ENCODE measurements at regions of chr1 and their contacts with region 1.

Region 1: GRCh38 chr1:207868774-207869721 is 41.9 kb downstream of the CD34 start:
- DNase-seq: peak; percentile 90
- ATAC-seq: peak; percentile 74
- H3K4me3 ChIP-seq: peak overlapping the region; percentile 63 to 79 (median 66)
- H3K4me3 Mint-ChIP-seq: peak overlapping the region; percentile 93
- H3K27ac ChIP-seq: peak overlapping the region; percentile 51 to 55
- H3K27ac Mint-ChIP-seq: peak overlapping the region; percentile 77
- H3K4me1 ChIP-seq: peaks cover 59 to 75% of the 10 kb centered on the region in 2 donors
- H3K4me1 Mint-ChIP-seq: peaks cover 87% of the 10 kb centered on the region
- H3K27me3 ChIP-seq: no peaks in the 10 kb centered on the region
- H3K27me3 Mint-ChIP-seq: no peaks in the 10 kb centered on the region
- CTCF ChIP-seq: peak; percentile 77

Region 2: GRCh38 chr1:207751790-207752455 is 117.1 kb before region 1 on chr1 and contains the start of gene CD46:
- CTCF ChIA-PET with region 1: no interaction called
- POLR2A ChIA-PET with region 1: no interaction called
- intact Hi-C with region 1: loop called (anchors 5 kb)
- DNase-seq: peak; percentile 94
- ATAC-seq: peak; percentile 98
- H3K4me3 ChIP-seq: peak within 1 kb of the TSS; percentile 70 to 91 (median 81)
- H3K4me3 Mint-ChIP-seq: peak within 1 kb of the TSS; percentile 99
- H3K27ac ChIP-seq: peak within 1 kb of the TSS; percentile 81 to 89
- H3K27ac Mint-ChIP-seq: peak within 1 kb of the TSS; percentile 98
- H3K4me1 ChIP-seq: peaks cover 18 to 26% of the 10 kb centered on the region in 2 donors
- H3K4me1 Mint-ChIP-seq: peaks cover 49% of the 10 kb centered on the region
- H3K27me3 ChIP-seq: no peaks in the 10 kb centered on the region
- H3K27me3 Mint-ChIP-seq: no peaks in the 10 kb centered on the region
- CTCF ChIP-seq: no peak
- total RNA-seq, gene CD46: 168 and 173 TPM in 2 replicates

Region 3: GRCh38 chr1:207805841-207806421 is 63.1 kb before region 1 on chr1:
- CTCF ChIA-PET with region 1: interaction called, 167 read pairs
- POLR2A ChIA-PET with region 1: interaction called, 5 read pairs
- intact Hi-C with region 1: no loop called
- DNase-seq: peak; percentile 14
- ATAC-seq: no peak
- H3K4me3 ChIP-seq: no peak overlapping the region
- H3K4me3 Mint-ChIP-seq: no peak overlapping the region
- H3K27ac ChIP-seq: peak overlapping the region in 1 of 2 donors; percentile 82
- H3K27ac Mint-ChIP-seq: peak overlapping the region; percentile 26
- H3K4me1 ChIP-seq: peaks cover 25 to 32% of the 10 kb centered on the region in 2 donors
- H3K4me1 Mint-ChIP-seq: peaks cover 53% of the 10 kb centered on the region
- H3K27me3 ChIP-seq: no peaks in the 10 kb centered on the region
- H3K27me3 Mint-ChIP-seq: no peaks in the 10 kb centered on the region
- CTCF ChIP-seq: no peak

Region 4: DNA sequence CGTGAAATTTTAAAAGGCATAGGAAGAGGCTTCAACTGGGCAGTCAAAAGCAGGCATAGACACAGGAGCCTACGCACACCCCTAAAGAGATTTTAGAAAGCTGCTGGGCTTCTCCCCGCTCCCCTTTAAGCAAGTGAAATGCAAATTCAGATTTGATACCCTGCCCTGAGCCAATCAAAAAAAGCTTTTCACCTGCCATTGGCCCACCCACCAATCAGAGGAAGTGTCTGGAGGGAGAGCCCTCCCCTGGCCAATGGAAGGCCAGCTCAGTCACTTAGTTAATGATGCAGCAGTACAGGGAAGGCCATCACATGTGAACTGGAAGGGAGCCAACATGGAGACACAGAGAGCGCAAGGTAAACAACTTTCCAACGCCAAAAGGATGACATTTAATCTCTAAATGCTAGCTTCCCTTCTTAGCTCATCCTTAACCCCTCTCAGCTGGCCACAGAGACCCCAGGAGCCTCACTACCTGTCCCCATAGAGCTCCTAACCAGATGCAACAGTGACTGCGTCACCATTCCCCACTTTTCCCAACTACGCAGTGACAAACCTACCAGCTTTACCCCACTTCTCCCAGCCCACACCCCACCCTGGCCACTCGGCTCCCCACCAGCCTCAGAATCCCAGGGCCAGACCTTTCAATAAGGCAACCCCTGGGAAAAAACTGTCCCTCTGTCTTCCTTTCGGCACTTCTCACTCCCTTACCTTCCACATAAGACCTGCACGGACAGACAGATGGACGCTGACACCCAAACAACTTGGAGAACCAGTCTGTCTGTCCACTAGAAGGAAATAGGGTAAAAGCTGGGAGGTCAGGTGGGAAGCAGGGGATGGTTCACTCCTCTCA is 46.2 kb before region 1 on chr1:
- CTCF ChIA-PET with region 1: interaction called, 526 read pairs
- POLR2A ChIA-PET with region 1: interaction called, 71 read pairs
- intact Hi-C with region 1: loop called (anchors 1 kb)
- DNase-seq: peak; percentile 94
- ATAC-seq: peak; percentile 66
- H3K4me3 ChIP-seq: peak overlapping the region; percentile 42 to 100 (median 96)
- H3K4me3 Mint-ChIP-seq: peak overlapping the region; percentile 99
- H3K27ac ChIP-seq: peak overlapping the region; percentile 93 to 96
- H3K27ac Mint-ChIP-seq: peak overlapping the region; percentile 99
- H3K4me1 ChIP-seq: peaks cover 68 to 87% of the 10 kb centered on the region in 2 donors
- H3K4me1 Mint-ChIP-seq: peaks cover 90% of the 10 kb centered on the region
- H3K27me3 ChIP-seq: no peaks in the 10 kb centered on the region
- H3K27me3 Mint-ChIP-seq: peaks cover 4% of the 10 kb centered on the region
- CTCF ChIP-seq: no peak

Region 5: GRCh38 chr1:207885129-207886032 is 16.3 kb after region 1 on chr1:
- CTCF ChIA-PET with region 1: interaction called, 214 read pairs
- POLR2A ChIA-PET with region 1: interaction called, 5 read pairs
- intact Hi-C with region 1: loop called (anchors 2 kb)
- DNase-seq: peak; percentile 82
- ATAC-seq: peak; percentile 87
- H3K4me3 ChIP-seq: no peak overlapping the region
- H3K4me3 Mint-ChIP-seq: peak overlapping the region; percentile 36
- H3K27ac ChIP-seq: no peak overlapping the region
- H3K27ac Mint-ChIP-seq: no peak overlapping the region
- H3K4me1 ChIP-seq: peaks cover 15 to 26% of the 10 kb centered on the region in 2 donors
- H3K4me1 Mint-ChIP-seq: peaks cover 35% of the 10 kb centered on the region
- H3K27me3 ChIP-seq: no peaks in the 10 kb centered on the region
- H3K27me3 Mint-ChIP-seq: peaks cover 12% of the 10 kb centered on the region
- CTCF ChIP-seq: peak; percentile 95